GM12878 (cell line): ENCODE measurements at regions of chr14 and their contacts with region 1.

Region 1: GRCh38 chr14:24215495-24216344 is at the start of gene MDP1:
- DNase-seq: peak; percentile 79
- ATAC-seq: peak; percentile 83
- H3K4me3 ChIP-seq: peak within 1 kb of the TSS; percentile 86
- H3K27ac ChIP-seq: peak within 1 kb of the TSS; percentile 82
- H3K4me1 ChIP-seq: peaks cover 15% of the 10 kb centered on the region
- H3K27me3 ChIP-seq: no peaks in the 10 kb centered on the region
- CTCF ChIP-seq: peak; percentile 82 to 94 (median 83); a peak in 5 of 6 replicates
- EP300 ChIP-seq: 0 out of 4 replicates have a peak, but pooled peaks have one; percentile 8 to 31
- POLR2A ChIP-seq: peak; percentile 93
- RAD21 ChIP-seq: peak; percentile 76
- polyA plus RNA-seq, gene MDP1: 39.2 to 45.8 TPM

Region 2: GRCh38 chr14:24146978-24147760 is 68.6 kb before region 1 on chr14 and contains the start of gene RNF31:
- CTCF ChIA-PET with region 1: interaction called, 3 read pairs
- POLR2A ChIA-PET with region 1: interaction called, 18 read pairs
- RAD21 ChIA-PET with region 1: interaction called, 8 read pairs
- SMC1A ChIA-PET with region 1: interaction called, 3 read pairs
- in situ Hi-C with region 1: no loop called
- intact Hi-C with region 1: no loop called
- DNase-seq: peak; percentile 92
- ATAC-seq: peak; percentile 93
- H3K4me3 ChIP-seq: peak within 1 kb of the TSS; percentile 82
- H3K27ac ChIP-seq: peak within 1 kb of the TSS; percentile 94
- H3K4me1 ChIP-seq: peaks cover 11% of the 10 kb centered on the region
- H3K27me3 ChIP-seq: no peaks in the 10 kb centered on the region
- CTCF ChIP-seq: no peak
- EP300 ChIP-seq: no peak
- POLR2A ChIP-seq: peak; percentile 28
- RAD21 ChIP-seq: no peak
- polyA plus RNA-seq, gene RNF31: 8.5 to 19.0 TPM

Region 3: GRCh38 chr14:24195191-24196070 is 20.3 kb before region 1 on chr14 and contains the start of gene TM9SF1:
- CTCF ChIA-PET with region 1: interaction called, 9 read pairs
- POLR2A ChIA-PET with region 1: interaction called, 50 read pairs
- RAD21 ChIA-PET with region 1: interaction called, 10 read pairs
- SMC1A ChIA-PET with region 1: interaction called, 8 read pairs
- in situ Hi-C with region 1: no loop called
- intact Hi-C with region 1: loop called (anchors 1 kb)
- DNase-seq: peak; percentile 52
- ATAC-seq: peak; percentile 93
- H3K4me3 ChIP-seq: peak within 1 kb of the TSS; percentile 68
- H3K27ac ChIP-seq: peak within 1 kb of the TSS; percentile 96
- H3K4me1 ChIP-seq: peaks cover 15% of the 10 kb centered on the region
- H3K27me3 ChIP-seq: no peaks in the 10 kb centered on the region
- CTCF ChIP-seq: no peak
- EP300 ChIP-seq: no peak
- POLR2A ChIP-seq: peak; percentile 95
- RAD21 ChIP-seq: no peak
- polyA plus RNA-seq, gene TM9SF1: 7.2 to 9.8 TPM

Region 4: GRCh38 chr14:24271134-24271833 is 55.6 kb after region 1 on chr14 and contains the start of gene RABGGTA:
- CTCF ChIA-PET with region 1: interaction called, 18 read pairs
- POLR2A ChIA-PET with region 1: interaction called, 3 read pairs
- RAD21 ChIA-PET with region 1: interaction called, 6 read pairs
- SMC1A ChIA-PET with region 1: interaction called, 6 read pairs
- in situ Hi-C with region 1: no loop called
- intact Hi-C with region 1: loop called (anchors 2 kb)
- DNase-seq: peak; percentile 80
- ATAC-seq: peak; percentile 89
- H3K4me3 ChIP-seq: peak within 1 kb of the TSS; percentile 88
- H3K27ac ChIP-seq: peak within 1 kb of the TSS; percentile 99
- H3K4me1 ChIP-seq: peaks cover 25% of the 10 kb centered on the region
- H3K27me3 ChIP-seq: no peaks in the 10 kb centered on the region
- CTCF ChIP-seq: peak; percentile 84 to 93 (median 86); a peak in 5 of 6 replicates
- EP300 ChIP-seq: no peak
- POLR2A ChIP-seq: peak; percentile 93
- RAD21 ChIP-seq: 0 out of 2 replicates have a peak, but pooled peaks have one; percentile 25
- polyA plus RNA-seq, gene RABGGTA: 38.2 to 38.6 TPM